K562 (cell line): ENCODE measurements at regions of chr5 and their contacts with region 1.

Region 1: GRCh38 chr5:81851481-81852178 is 100.7 kb upstream of the SSBP2 start:
- DNase-seq: peak; percentile 82 to 96 (median 86)
- ATAC-seq: peak; percentile 85
- H3K4me3 ChIP-seq: peak overlapping the region; percentile 34
- H3K27ac ChIP-seq: peak overlapping the region; percentile 81
- H3K4me1 ChIP-seq: peaks cover 32 to 50% of the 10 kb centered on the region in 2 experiments
- H3K27me3 ChIP-seq: no peaks in the 10 kb centered on the region
- CTCF ChIP-seq: no peak
- EP300 ChIP-seq: peak; percentile 97
- POLR2A ChIP-seq: peak; percentile 69
- RAD21 ChIP-seq: peak; percentile 68 to 72

Region 2: GRCh38 chr5:81506900-81507588 is 344.6 kb before region 1 on chr5:
- CTCF ChIA-PET with region 1: no interaction called
- POLR2A ChIA-PET with region 1: no interaction called
- in situ Hi-C with region 1: loop called (anchors 5 kb)
- intact Hi-C with region 1: loop called (anchors 1 kb)
- DNase-seq: peak; percentile 30 to 83 (median 61)
- ATAC-seq: peak; percentile 100
- H3K4me3 ChIP-seq: no peak overlapping the region
- H3K27ac ChIP-seq: no peak overlapping the region; the same call in 2 of the 3 replicates
- H3K4me1 ChIP-seq: peaks cover 0 to 9% of the 10 kb centered on the region in 2 experiments; a peak in 2 of 5 replicates
- H3K27me3 ChIP-seq: no peaks in the 10 kb centered on the region
- CTCF ChIP-seq: peak; percentile 72 to 93 (median 80)
- EP300 ChIP-seq: no peak; the same call in 1 of the 2 replicates
- POLR2A ChIP-seq: no peak
- RAD21 ChIP-seq: peak; percentile 93 to 94

Region 3: GRCh38 chr5:81838307-81838906 is 13.2 kb before region 1 on chr5:
- CTCF ChIA-PET with region 1: no interaction called
- POLR2A ChIA-PET with region 1: interaction called, 13 read pairs
- in situ Hi-C with region 1: no loop called
- intact Hi-C with region 1: no loop called
- DNase-seq: peak; percentile 36 to 78 (median 52)
- ATAC-seq: peak; percentile 97
- H3K4me3 ChIP-seq: no peak overlapping the region
- H3K27ac ChIP-seq: 0 out of 3 replicates have a peak overlapping the region, but pooled peaks have one; percentile 8
- H3K4me1 ChIP-seq: peaks cover 0 to 9% of the 10 kb centered on the region in 2 experiments; a peak in 3 of 5 replicates
- H3K27me3 ChIP-seq: no peaks in the 10 kb centered on the region
- CTCF ChIP-seq: peak; percentile 70 to 83 (median 79)
- EP300 ChIP-seq: no peak
- POLR2A ChIP-seq: no peak
- RAD21 ChIP-seq: peak; percentile 80 to 89

Region 4: DNA sequence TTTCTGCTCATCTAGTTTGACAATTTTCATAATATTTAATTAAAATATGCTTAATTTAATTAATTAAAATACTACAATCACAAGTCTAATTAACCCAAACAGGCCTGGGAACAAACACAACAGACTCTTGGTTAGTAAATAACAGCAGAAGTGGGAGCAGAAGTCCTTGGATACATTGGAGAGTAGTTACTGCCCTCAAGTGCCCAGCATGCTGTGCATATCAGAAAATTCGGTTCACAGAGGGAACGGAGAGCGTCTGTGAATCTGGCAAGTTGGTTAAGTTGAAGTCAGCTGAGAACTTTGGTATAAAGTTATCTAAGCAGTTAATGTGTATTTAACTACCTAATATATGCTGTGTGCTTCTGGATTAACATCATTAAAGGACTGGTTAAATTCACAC is 33.2 kb after region 1 on chr5:
- CTCF ChIA-PET with region 1: no interaction called
- POLR2A ChIA-PET with region 1: no interaction called
- in situ Hi-C with region 1: no loop called
- intact Hi-C with region 1: no loop called
- DNase-seq: no peak
- ATAC-seq: 0 out of 3 replicates have a peak, but pooled peaks have one; percentile 40
- H3K4me3 ChIP-seq: no peak overlapping the region
- H3K27ac ChIP-seq: no peak overlapping the region
- H3K4me1 ChIP-seq: no peaks in the 10 kb centered on the region
- H3K27me3 ChIP-seq: no peaks in the 10 kb centered on the region; a peak in 1 of 5 replicates
- CTCF ChIP-seq: no peak; a peak in 2 of 6 replicates
- EP300 ChIP-seq: no peak
- POLR2A ChIP-seq: no peak
- RAD21 ChIP-seq: peak in 1 of 2 experiments; percentile 31; a peak in 2 of 4 replicates

Region 5: DNA sequence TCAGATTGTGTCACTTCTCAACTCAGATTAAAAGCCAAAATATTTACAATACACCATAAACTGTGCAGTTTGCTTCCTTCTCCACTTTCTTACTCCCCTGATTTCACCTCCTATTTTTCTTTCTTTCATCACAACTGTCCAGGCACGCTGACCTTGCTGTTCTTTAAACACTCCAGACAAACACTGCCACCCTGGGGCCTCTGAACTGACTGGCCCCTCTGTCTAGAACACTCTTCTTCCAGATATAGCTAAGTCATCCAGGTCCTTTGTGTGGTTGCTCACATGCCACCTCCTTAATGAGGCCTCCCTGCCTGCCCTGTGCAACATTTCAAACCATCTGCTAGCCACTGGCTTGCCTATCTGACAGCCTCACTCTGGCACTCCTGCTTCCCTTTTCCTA is 166.8 kb after region 1 on chr5:
- CTCF ChIA-PET with region 1: no interaction called
- POLR2A ChIA-PET with region 1: no interaction called
- in situ Hi-C with region 1: no loop called
- intact Hi-C with region 1: loop called (anchors 5 kb)
- DNase-seq: peak in 2 of 4 experiments; percentile 32 to 59
- ATAC-seq: peak; percentile 93
- H3K4me3 ChIP-seq: no peak overlapping the region
- H3K27ac ChIP-seq: 0 out of 3 replicates have a peak overlapping the region, but pooled peaks have one; percentile 5
- H3K4me1 ChIP-seq: peaks cover 10 to 11% of the 10 kb centered on the region in 2 experiments; a peak in 4 of 5 replicates
- H3K27me3 ChIP-seq: no peaks in the 10 kb centered on the region
- CTCF ChIP-seq: peak in 2 of 3 experiments; percentile 14 to 41; a peak in 3 of 6 replicates
- EP300 ChIP-seq: peak; percentile 8; the same call in 1 of the 2 replicates
- POLR2A ChIP-seq: no peak
- RAD21 ChIP-seq: peak; percentile 42 to 47

Region 6: GRCh38 chr5:82225525-82226172 is 374.0 kb after region 1 on chr5:
- CTCF ChIA-PET with region 1: no interaction called
- POLR2A ChIA-PET with region 1: interaction called, 3 read pairs
- in situ Hi-C with region 1: no loop called
- intact Hi-C with region 1: loop called (anchors 10 kb)
- DNase-seq: peak; percentile 69 to 76 (median 72)
- ATAC-seq: peak; percentile 97
- H3K4me3 ChIP-seq: no peak overlapping the region
- H3K27ac ChIP-seq: no peak overlapping the region
- H3K4me1 ChIP-seq: no peaks in the 10 kb centered on the region
- H3K27me3 ChIP-seq: no peaks in the 10 kb centered on the region
- CTCF ChIP-seq: peak; percentile 82 to 89 (median 87)
- EP300 ChIP-seq: no peak
- POLR2A ChIP-seq: no peak
- RAD21 ChIP-seq: peak; percentile 82 to 93